ENCODE measurements at regions of chr6 and their contacts with region 1.

Region 1: GRCh38 chr6:24855395-24856245 is 56.9 kb upstream of the ARMH2 start:
- DNase-seq: no peak
- H3K4me3 ChIP-seq: no peak overlapping the region
- H3K27ac ChIP-seq: peak overlapping the region in 1 of 4 donors; percentile 35
- H3K4me1 ChIP-seq: peaks cover 5 to 17% (median 8%) of the 10 kb centered on the region in 4 donors
- H3K27me3 ChIP-seq: no peaks in the 10 kb centered on the region
- CTCF ChIP-seq: peak; percentile 81 to 93 (median 83)
- EP300 ChIP-seq: no peak
- POLR2A ChIP-seq: no peak

Region 2: GRCh38 chr6:24991810-24992467 is 136.3 kb after region 1 on chr6:
- intact Hi-C with region 1: loop called (anchors 2 kb)
- DNase-seq: no peak
- H3K4me3 ChIP-seq: no peak overlapping the region
- H3K27ac ChIP-seq: no peak overlapping the region
- H3K4me1 ChIP-seq: no peaks in the 10 kb centered on the region
- H3K27me3 ChIP-seq: no peaks in the 10 kb centered on the region
- CTCF ChIP-seq: peak; percentile 49 to 57 (median 54)
- EP300 ChIP-seq: no peak
- POLR2A ChIP-seq: no peak

Region 3: GRCh38 chr6:25017932-25018567 is 162.4 kb after region 1 on chr6:
- intact Hi-C with region 1: loop called (anchors 5 kb)
- DNase-seq: no peak
- H3K4me3 ChIP-seq: no peak overlapping the region
- H3K27ac ChIP-seq: no peak overlapping the region
- H3K4me1 ChIP-seq: peaks cover 3 to 25% (median 18%) of the 10 kb centered on the region in 4 donors
- H3K27me3 ChIP-seq: no peaks in the 10 kb centered on the region
- CTCF ChIP-seq: peak in 2 of 3 experiments; percentile 42
- EP300 ChIP-seq: no peak
- POLR2A ChIP-seq: no peak

Region 4: DNA sequence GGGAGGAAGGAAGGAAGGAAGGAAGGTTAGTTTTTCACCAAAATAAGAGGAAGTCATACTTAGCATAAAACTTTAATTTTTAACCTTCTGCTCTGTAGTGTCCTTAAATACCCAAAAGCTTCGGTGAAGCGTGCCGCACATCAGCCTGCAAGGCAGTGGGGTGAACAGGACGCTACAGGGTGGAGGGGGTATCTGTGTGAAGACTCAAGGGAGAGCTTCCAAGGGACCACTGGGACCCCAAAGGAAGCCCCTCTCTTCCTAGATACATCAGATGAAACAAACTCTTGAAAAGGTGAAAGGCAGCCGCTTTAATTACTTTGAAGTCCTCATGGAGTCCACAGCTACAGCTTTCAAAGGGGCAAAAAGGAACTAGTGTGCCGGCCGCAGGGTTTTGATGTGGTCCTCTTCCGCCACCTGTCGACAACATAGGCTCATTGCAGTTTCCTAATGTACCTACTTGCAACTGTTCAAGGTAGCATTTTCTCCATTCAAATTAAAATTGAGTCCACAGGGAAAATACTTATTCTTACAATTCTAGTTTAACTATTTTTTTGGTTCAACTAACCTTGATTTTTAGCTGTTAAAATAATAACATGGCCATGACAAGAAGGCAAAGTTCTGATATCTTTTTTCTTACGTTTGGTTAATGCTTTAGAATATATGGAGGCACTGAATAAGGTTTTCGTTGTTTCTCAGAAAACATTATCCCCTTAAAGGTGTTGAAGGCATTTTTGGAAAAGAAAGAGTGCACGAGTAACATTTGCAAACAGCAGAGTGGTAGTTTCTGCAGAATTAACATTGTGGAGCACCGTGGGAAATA is 215.1 kb after region 1 on chr6:
- intact Hi-C with region 1: loop called (anchors 1 kb)
- DNase-seq: peak; percentile 96
- H3K4me3 ChIP-seq: no peak overlapping the region
- H3K27ac ChIP-seq: no peak overlapping the region
- H3K4me1 ChIP-seq: peaks cover 0 to 3% (median 0%) of the 10 kb centered on the region in 4 donors
- H3K27me3 ChIP-seq: peaks cover 0 to 3% (median 0%) of the 10 kb centered on the region in 4 donors
- CTCF ChIP-seq: peak; percentile 89 to 93 (median 92)
- EP300 ChIP-seq: no peak
- POLR2A ChIP-seq: no peak

Measured in esophagus muscularis mucosa (tissue), 4 donors.